Common myeloid progenitor, CD34-positive (primary cell): ENCODE measurements at regions of chr11 and their contacts with region 1.

Region 1: DNA sequence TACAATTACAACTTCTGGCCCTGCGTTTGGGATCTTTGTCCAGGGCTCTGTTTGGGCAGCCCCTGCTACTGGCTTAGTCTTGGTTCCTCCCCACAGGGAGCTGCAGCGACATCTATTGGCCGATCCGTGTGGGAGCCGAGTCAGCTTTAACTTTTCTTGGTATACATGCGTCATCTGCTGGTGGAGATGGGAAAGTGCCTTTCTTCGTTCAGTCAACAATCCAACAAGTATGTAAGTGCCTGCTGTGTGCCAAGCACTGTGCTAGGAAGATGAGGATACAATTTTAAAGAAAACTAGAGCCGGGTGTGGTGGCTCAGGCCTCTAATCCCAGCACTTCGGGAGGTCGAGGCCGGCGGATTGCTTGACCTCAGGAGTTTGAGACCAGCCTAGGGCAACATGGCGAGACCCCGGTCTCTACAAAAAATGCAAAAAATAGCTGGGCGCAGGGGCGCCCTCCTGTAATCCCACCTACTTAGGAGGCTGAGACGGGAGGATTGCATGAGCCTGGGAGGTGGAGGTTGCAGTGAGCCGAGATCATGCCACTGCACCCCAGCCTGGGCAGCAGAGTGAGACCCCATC is 8.2 kb downstream of the TPBGL start:
- DNase-seq: peak; percentile 87 to 94 (median 90)
- H3K4me3 ChIP-seq: no peak overlapping the region
- H3K27ac ChIP-seq: no peak overlapping the region
- H3K4me1 ChIP-seq: no peaks in the 10 kb centered on the region
- H3K27me3 ChIP-seq: peaks cover 0 to 16% (median 11%) of the 10 kb centered on the region in 5 experiments

Region 2: GRCh38 chr11:74929431-74930363 is 319.1 kb before region 1 on chr11:
- CTCF ChIA-PET with region 1: interaction called, 17 read pairs
- POLR2A ChIA-PET with region 1: no interaction called
- DNase-seq: peak; percentile 87 to 93 (median 90)
- H3K4me3 ChIP-seq: no peak overlapping the region
- H3K27ac ChIP-seq: no peak overlapping the region
- H3K4me1 ChIP-seq: no peaks in the 10 kb centered on the region
- H3K27me3 ChIP-seq: no peaks in the 10 kb centered on the region

Region 3: DNA sequence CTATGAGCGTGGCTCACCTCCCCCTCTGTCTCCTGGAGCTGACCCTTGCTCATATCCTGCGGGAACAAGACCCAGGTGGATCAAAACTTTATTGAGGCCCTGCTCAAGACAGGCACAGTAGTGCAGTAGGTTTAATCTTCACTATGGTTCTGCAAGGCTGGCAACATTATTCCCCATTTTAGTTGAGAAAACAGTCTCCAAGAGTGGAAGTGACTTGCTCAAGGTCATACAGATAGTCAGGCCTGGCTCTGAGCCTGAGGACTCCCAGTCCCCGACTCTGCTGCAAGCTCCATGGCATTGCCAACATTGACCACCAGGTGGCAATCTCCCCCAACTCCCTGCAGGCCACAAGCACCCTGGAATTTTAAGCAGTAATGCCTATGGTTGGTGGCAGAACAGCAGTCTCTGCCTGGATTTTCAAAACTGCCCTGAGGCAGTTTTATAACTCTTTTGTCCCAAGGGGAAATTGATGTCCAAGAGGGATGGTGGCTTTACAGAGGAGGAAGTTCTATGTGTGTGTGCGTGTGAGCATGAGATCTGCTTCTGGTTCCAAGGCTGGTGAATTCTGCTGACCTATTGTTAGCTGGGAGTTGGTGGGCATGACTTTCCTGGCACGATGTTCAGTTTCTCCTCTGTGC is 225.9 kb before region 1 on chr11:
- CTCF ChIA-PET with region 1: interaction called, 23 read pairs
- POLR2A ChIA-PET with region 1: no interaction called
- DNase-seq: peak; percentile 73 to 87 (median 80)
- H3K4me3 ChIP-seq: no peak overlapping the region
- H3K27ac ChIP-seq: no peak overlapping the region
- H3K4me1 ChIP-seq: no peaks in the 10 kb centered on the region
- H3K27me3 ChIP-seq: no peaks in the 10 kb centered on the region

Region 4: GRCh38 chr11:75204685-75205563 is 43.9 kb before region 1 on chr11:
- CTCF ChIA-PET with region 1: interaction called, 29 read pairs
- POLR2A ChIA-PET with region 1: no interaction called
- DNase-seq: peak; percentile 69 to 87 (median 79)
- H3K4me3 ChIP-seq: no peak overlapping the region
- H3K27ac ChIP-seq: no peak overlapping the region
- H3K4me1 ChIP-seq: no peaks in the 10 kb centered on the region
- H3K27me3 ChIP-seq: peaks cover 0 to 25% (median 10%) of the 10 kb centered on the region in 5 experiments

Region 5: DNA sequence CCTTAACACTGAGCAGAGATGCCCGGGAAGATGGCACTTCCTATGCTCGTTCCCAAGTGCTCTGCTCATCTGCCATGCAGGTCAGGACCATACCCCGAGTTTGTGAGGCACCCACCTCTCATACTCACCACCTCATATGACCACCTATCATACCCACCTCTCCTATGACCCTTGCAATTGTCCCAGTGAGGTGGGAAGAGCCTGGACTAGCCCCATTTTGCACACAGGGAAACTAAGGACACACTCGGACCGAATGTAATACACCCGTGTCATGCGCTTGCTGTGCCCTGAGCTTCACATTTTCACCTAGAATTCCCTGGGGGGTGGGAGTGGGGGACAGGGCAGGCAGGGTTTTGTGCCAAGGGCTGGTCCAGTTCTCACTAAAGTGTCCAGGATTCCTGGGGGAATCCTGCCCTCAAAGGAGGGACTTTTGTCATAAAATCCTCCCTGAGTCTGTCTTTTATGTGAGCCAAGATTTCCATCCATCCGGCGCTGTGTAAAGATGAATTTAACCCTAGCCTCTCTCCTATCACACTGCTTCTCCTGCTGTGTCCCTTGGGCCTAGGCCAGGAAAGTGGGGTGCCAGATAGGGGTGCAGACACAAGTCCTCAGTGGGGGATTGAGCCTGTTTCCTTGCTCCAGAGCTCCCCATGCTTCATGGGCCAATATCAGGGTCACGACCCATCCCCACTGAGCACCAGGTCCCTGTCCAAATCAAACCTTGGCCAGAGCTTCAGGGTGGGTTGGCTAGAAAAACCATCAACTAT is 11.8 kb after region 1 on chr11:
- CTCF ChIA-PET with region 1: interaction called, 11 read pairs
- POLR2A ChIA-PET with region 1: interaction called, 3 read pairs
- DNase-seq: no peak
- H3K4me3 ChIP-seq: no peak overlapping the region
- H3K27ac ChIP-seq: no peak overlapping the region
- H3K4me1 ChIP-seq: peaks cover 8 to 46% (median 41%) of the 10 kb centered on the region in 4 experiments
- H3K27me3 ChIP-seq: peaks cover 0 to 4% (median 0%) of the 10 kb centered on the region in 5 experiments

Region 6: GRCh38 chr11:75270896-75271418 is 22.2 kb after region 1 on chr11:
- CTCF ChIA-PET with region 1: interaction called, 11 read pairs
- POLR2A ChIA-PET with region 1: no interaction called
- DNase-seq: peak; percentile 31 to 49 (median 44)
- H3K4me3 ChIP-seq: no peak overlapping the region
- H3K27ac ChIP-seq: no peak overlapping the region
- H3K4me1 ChIP-seq: peaks cover 2 to 45% (median 32%) of the 10 kb centered on the region in 4 experiments
- H3K27me3 ChIP-seq: no peaks in the 10 kb centered on the region

Region 7: DNA sequence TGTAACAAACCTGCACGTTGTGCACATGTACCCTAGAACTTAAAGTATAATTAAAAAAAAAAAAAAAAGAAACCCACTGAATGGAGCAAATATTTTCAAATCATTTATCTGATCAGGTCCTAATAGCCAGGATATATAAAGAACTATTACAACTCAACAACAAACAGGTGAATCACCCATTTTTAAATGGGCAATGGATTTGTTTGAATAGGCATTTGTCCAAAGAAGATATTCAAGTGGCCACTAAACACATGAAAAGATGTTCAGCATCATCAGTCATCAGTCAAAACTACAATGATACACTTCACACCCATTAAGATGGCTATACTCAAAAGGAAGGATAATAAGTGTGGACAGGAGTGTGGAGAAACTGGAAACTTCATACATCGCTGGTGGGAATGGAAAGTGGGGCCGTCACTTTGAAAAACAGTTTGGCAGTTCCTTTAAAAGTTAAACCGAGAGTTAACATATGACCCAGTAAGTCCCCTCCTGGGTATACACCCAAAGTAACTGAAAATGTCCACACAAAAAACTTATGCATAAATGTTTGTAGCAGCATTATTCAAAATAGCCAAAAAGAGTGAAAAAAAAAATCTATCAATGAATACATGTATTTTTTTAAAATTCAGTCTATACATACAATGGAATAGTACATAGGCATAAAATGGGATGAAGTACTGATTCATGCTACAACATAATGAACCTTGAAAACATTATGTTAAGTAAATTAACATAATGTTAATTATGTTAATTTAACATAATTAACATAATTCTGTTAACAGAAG is 49.6 kb after region 1 on chr11:
- CTCF ChIA-PET with region 1: no interaction called
- POLR2A ChIA-PET with region 1: no interaction called
- DNase-seq: no peak
- H3K4me3 ChIP-seq: no peak overlapping the region
- H3K27ac ChIP-seq: no peak overlapping the region
- H3K4me1 ChIP-seq: peaks cover 0 to 19% (median 12%) of the 10 kb centered on the region in 4 experiments
- H3K27me3 ChIP-seq: no peaks in the 10 kb centered on the region

Region 8: DNA sequence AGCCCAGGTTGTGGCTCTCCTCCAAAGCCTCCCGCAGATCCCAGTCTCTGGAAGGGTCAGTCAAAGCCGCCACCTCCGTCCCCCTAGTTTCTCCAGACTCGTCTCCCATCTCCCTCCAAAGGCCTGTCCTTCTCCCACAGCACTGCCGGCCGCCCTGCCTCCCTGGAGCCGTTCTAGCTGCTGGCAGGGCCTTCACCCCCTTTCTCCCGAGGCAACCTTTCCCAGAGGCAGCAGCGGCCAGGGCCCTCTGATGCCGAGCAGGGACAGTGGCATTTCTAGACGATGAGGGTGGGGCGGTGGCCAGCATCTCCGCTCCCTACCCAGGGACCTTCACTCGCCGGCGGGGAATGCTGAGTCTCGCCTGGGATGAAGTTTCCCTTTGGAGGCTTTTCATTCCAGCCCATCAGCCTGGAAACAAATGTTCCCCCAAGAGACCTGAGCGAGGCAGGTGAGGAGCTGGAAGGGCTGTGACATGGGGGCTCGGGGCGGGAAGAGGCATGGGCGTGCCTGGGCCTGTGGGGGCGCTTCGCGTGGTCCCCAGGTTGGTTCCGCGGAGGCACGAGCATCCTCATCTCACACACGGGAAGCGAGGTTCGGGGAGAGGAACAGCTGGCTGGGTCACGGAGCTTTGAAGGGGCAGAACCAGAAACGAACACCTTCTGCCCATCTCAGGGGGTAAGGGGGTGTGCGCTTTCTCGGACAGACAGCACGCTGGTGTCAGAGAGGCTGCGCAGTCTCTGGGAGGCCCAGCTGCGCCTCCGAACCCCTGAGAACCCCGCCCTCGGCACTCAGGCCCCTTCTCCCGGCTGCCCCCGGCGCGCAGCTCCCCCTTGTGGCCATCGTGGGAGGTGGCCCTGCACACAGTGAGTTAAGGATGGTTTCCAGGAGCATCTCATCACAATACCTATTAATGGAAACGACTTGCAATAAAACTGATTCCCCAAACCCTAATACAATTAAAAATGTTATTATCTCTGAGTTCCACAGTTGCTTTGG is 202.3 kb after region 1 on chr11:
- CTCF ChIA-PET with region 1: no interaction called
- POLR2A ChIA-PET with region 1: no interaction called
- DNase-seq: peak in 1 of 3 donors; percentile 15
- H3K4me3 ChIP-seq: no peak overlapping the region
- H3K27ac ChIP-seq: no peak overlapping the region
- H3K4me1 ChIP-seq: no peaks in the 10 kb centered on the region
- H3K27me3 ChIP-seq: no peaks in the 10 kb centered on the region